ENCODE measurements at regions of chr10 and their contacts with region 1.

Region 1: DNA sequence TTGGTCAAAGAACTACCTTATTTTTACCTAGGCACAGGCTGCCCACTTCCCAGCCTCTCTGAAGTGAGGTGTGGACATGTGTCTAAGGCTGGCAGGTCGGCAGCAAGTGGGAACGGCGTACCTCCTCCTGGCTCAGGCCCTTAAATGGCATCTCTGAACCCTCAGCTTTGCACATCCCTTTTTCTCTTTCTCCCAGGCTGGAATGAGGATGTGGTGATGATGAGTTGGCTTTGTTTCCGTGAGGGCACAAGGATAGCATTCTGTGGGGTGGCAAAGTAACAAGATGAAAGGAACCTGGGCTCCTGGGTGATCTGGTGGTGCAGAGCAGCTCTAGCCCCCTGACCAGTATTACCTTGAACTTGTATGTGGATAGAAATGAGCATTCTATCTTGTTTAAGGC is 196.8 kb downstream of the REEP3 start:
- DNase-seq: no peak
- ATAC-seq: peak in 1 of 2 donors; percentile 6
- H3K4me3 ChIP-seq: no peak overlapping the region
- H3K27ac ChIP-seq: no peak overlapping the region
- H3K4me1 ChIP-seq: peaks cover 35% of the 10 kb centered on the region
- H3K27me3 ChIP-seq: no peaks in the 10 kb centered on the region
- CTCF ChIP-seq: no peak

Region 2: GRCh38 chr10:63629363-63630084 is 88.5 kb before region 1 on chr10:
- intact Hi-C with region 1: loop called (anchors 5 kb)
- DNase-seq: peak; percentile 96
- ATAC-seq: peak; percentile 84 to 89
- H3K4me3 ChIP-seq: peak overlapping the region; percentile 67
- H3K27ac ChIP-seq: peak overlapping the region; percentile 99
- H3K4me1 ChIP-seq: peaks cover 40% of the 10 kb centered on the region
- H3K27me3 ChIP-seq: no peaks in the 10 kb centered on the region
- CTCF ChIP-seq: peak; percentile 85

Measured in lower lobe of right lung (tissue), 2 donors.